ENCODE measurements at regions of chr16 and their contacts with region 1.

Region 1: GRCh38 chr16:25031441-25032307 is 16.5 kb upstream of the ARHGAP17 start:
- DNase-seq: peak; percentile 88
- H3K4me3 Mint-ChIP-seq: peak overlapping the region; percentile 85
- H3K27ac Mint-ChIP-seq: peak overlapping the region; percentile 98
- H3K4me1 Mint-ChIP-seq: peaks cover 43% of the 10 kb centered on the region
- H3K27me3 Mint-ChIP-seq: peaks cover under 1% of the 10 kb centered on the region

Region 2: GRCh38 chr16:24729362-24729984 is 302.2 kb before region 1 on chr16 and contains the start of gene TNRC6A:
- intact Hi-C with region 1: no loop called
- DNase-seq: peak; percentile 76
- H3K4me3 Mint-ChIP-seq: peak within 1 kb of the TSS; percentile 92
- H3K27ac Mint-ChIP-seq: peak within 1 kb of the TSS; percentile 96
- H3K4me1 Mint-ChIP-seq: peaks cover 42% of the 10 kb centered on the region
- H3K27me3 Mint-ChIP-seq: no peaks in the 10 kb centered on the region
- total RNA-seq, gene TNRC6A: 57.8 and 60.9 TPM in 2 replicates

Region 3: GRCh38 chr16:25045696-25046381 is 14.2 kb after region 1 on chr16:
- intact Hi-C with region 1: loop called (anchors 1 kb)
- DNase-seq: no peak
- H3K4me3 Mint-ChIP-seq: no peak overlapping the region
- H3K27ac Mint-ChIP-seq: peak overlapping the region; percentile 4
- H3K4me1 Mint-ChIP-seq: peaks cover 46% of the 10 kb centered on the region
- H3K27me3 Mint-ChIP-seq: no peaks in the 10 kb centered on the region

Region 4: GRCh38 chr16:25093208-25094061 is 61.8 kb after region 1 on chr16:
- intact Hi-C with region 1: loop called (anchors 1 kb)
- DNase-seq: no peak
- H3K4me3 Mint-ChIP-seq: peak overlapping the region; percentile 56
- H3K27ac Mint-ChIP-seq: peak overlapping the region; percentile 77
- H3K4me1 Mint-ChIP-seq: peaks cover 25% of the 10 kb centered on the region
- H3K27me3 Mint-ChIP-seq: peaks cover 4% of the 10 kb centered on the region

Region 5: GRCh38 chr16:25257504-25257955 is 225.9 kb after region 1 on chr16 and contains the start of gene ZKSCAN2:
- intact Hi-C with region 1: loop called (anchors 1 kb)
- DNase-seq: peak; percentile 83
- H3K4me3 Mint-ChIP-seq: peak within 1 kb of the TSS; percentile 91
- H3K27ac Mint-ChIP-seq: peak within 1 kb of the TSS; percentile 97
- H3K4me1 Mint-ChIP-seq: peaks cover 53% of the 10 kb centered on the region
- H3K27me3 Mint-ChIP-seq: peaks cover 2% of the 10 kb centered on the region
- total RNA-seq, gene ZKSCAN2: 6.1 and 6.4 TPM in 2 replicates